GM10248 (cell line): ENCODE measurements at regions of chr5 and their contacts with region 1.

Region 1: GRCh38 chr5:134041570-134042411 is 37.0 kb upstream of the VDAC1 start:
- DNase-seq: peak; percentile 82
- CTCF ChIP-seq: no peak

Region 2: GRCh38 chr5:133635051-133635450 is 406.7 kb before region 1 on chr5:
- CTCF ChIA-PET with region 1: no interaction called
- POLR2A ChIA-PET with region 1: no interaction called
- DNase-seq: no peak
- CTCF ChIP-seq: no peak

Region 3: GRCh38 chr5:133763744-133764143 is 278.0 kb before region 1 on chr5:
- CTCF ChIA-PET with region 1: no interaction called
- POLR2A ChIA-PET with region 1: no interaction called
- DNase-seq: no peak
- CTCF ChIP-seq: no peak

Region 4: DNA sequence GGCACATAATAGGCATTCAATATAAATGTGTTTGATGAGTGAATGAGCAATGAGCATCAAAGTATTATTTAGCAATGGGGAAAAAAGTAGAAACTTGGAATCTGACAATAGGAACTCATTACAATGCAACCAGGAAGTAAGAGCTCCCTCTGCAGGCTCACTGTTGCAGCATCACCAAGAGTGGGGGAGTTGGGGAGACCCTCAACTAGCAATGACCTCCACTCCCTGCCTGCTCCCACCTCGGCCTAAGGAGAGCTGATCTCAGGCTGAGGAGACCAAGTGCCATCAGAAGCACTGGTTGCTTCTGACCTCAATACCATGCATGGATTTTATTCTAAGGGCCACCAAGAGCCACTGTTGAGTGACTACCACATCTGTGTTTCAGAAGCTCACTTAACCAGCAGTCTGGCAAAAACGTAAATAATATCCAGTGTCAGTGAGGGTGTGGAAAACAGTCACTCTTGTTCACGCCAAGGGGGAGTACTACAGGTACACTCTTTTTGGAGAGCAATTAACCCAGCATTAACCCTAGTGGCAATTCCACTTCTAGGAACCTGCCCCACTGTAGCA is 45.0 kb before region 1 on chr5:
- CTCF ChIA-PET with region 1: interaction called, 13 read pairs
- POLR2A ChIA-PET with region 1: no interaction called
- DNase-seq: no peak
- CTCF ChIP-seq: peak; percentile 61

Region 5: DNA sequence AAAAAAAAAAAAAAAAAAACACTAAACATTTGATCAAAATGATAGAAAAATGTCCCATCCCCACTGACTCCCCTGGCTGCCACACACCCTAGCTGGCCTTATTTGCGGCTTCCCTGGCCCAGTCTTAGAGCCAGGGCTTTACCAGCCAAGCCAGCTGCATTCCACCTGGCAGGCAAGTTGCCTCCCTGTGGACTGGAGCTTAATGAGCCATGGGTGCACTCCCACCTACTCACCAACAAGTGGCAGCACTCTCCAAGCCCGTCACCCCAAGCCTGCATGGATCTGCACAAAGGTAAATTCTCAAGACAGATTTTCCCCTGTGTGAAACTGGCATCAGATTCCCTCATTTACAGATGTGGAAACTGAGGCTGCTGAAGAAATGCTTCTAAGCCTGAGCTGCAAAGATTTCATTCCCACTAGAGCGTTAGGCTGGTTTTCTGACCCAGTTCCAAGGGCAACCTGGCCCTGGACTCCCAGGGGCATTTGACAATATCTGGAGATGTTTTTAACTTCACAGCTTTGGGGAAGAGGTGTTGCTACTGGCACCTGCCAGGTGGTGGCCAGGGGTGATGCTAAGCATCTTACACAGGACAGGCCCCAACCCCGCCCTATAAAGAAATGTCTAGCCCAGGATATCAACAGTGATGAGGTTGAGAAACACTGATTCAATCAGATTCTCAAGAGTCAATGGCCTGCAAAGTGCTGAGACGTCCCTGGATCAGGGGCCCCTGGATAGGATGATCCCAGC is 15.1 kb before region 1 on chr5:
- CTCF ChIA-PET with region 1: interaction called, 158 read pairs
- POLR2A ChIA-PET with region 1: no interaction called
- DNase-seq: peak; percentile 79
- CTCF ChIP-seq: peak; percentile 49

Region 6: GRCh38 chr5:134070725-134071613 is 29.2 kb after region 1 on chr5:
- CTCF ChIA-PET with region 1: interaction called, 39 read pairs
- POLR2A ChIA-PET with region 1: no interaction called
- DNase-seq: peak; percentile 67
- CTCF ChIP-seq: peak; percentile 3

Region 7: GRCh38 chr5:134114886-134115805 is 73.4 kb after region 1 on chr5:
- CTCF ChIA-PET with region 1: interaction called, 111 read pairs
- POLR2A ChIA-PET with region 1: interaction called, 3 read pairs
- DNase-seq: peak; percentile 50
- CTCF ChIP-seq: no peak

Region 8: GRCh38 chr5:134225618-134226440 is 184.0 kb after region 1 on chr5 and contains the start of gene PPP2CA:
- CTCF ChIA-PET with region 1: interaction called, 14 read pairs
- POLR2A ChIA-PET with region 1: no interaction called
- DNase-seq: peak; percentile 97
- CTCF ChIP-seq: no peak